ENCODE measurements at regions of chr22 and their contacts with region 1.

Region 1: DNA sequence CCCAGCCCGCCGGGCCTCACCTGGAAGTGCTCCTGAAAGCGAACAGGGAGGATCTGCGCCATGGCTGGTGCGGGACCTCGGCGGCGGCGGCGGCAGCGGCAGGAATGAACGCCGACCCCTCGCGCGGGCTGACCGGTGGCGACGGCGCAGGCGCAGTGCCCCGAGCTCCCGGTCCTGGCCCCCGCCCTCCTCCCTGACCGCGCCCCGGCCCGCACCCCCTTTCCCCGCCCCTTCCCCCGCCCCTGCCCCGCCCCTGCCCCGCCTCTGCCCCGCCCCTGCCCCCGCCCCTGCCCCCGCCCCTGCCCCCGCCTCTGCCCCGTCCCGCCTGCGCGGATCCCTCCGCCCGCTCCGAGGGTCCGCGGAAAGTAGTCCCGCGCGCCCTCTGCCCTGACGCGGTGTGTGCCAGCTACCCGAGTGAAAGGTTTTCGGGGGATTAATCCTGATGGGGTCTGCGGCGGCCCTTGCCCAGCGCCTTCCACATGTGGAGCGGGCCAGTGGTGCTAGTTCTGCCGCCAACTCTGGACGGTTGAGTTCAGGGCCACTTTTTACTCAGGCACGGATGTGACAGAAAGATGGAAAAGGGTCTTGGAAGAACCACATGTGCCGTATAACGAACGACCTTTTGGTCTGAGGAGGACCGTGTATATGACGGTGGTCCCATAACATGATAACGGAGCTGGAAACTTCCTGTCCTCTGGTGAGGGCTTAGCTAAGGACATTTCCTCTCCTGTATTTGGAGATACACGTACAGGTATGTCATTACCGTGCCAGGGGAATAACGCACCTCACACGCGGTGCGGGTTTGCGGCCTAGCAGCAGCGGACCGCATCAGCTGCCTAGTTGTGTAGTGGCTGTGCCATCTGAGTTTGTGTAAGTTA is at the start of gene CLTCL1:
- DNase-seq: peak; percentile 44 to 82 (median 63)
- ATAC-seq: peak; percentile 69
- H3K4me3 ChIP-seq: peak within 1 kb of the TSS; percentile 73
- H3K4me3 Mint-ChIP-seq: peak within 1 kb of the TSS; percentile 91
- H3K27ac ChIP-seq: no peak within 1 kb of the TSS
- H3K27ac Mint-ChIP-seq: peak within 1 kb of the TSS; percentile 67
- H3K4me1 ChIP-seq: peaks cover 21% of the 10 kb centered on the region
- H3K4me1 Mint-ChIP-seq: peaks cover 17% of the 10 kb centered on the region
- H3K27me3 ChIP-seq: peaks cover 0 to 14% of the 10 kb centered on the region in 2 experiments
- H3K27me3 Mint-ChIP-seq: peaks cover 5% of the 10 kb centered on the region
- CTCF ChIP-seq: no peak
- total RNA-seq, gene CLTCL1: 0.52 to 1.5 TPM

Region 2: DNA sequence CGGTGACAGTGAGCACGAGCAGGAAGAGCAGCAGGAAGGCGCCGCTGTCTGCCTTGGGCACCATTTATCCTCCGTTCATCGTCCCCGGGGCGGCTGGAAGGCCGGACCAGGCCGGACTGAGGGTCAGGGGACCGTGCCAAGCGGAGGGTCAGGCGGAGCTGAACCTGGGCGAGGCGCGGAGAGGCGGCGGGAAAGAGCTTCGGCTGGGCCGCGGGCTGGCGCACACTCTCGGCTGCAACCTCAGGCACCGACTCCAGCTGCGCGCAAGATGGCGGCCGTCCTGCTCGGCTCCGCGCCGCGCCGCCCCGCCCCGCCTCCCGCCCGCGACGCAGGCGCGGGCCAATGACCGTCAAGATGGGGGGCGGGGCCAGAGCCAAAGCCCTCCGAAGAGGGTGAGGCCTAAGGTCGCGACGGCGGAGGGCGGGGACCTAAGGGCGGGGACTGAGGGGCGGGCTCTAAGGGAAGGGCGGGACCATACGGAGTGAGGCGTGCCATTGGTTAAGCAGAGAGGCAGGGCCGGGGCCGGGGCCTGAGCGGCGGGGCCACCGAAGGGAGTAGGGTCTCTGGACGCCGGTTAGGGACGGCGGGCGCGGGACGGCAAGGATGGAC is 169.6 kb before region 1 on chr22 and contains the start of gene DGCR2:
- CTCF ChIA-PET with region 1: no interaction called
- POLR2A ChIA-PET with region 1: no interaction called
- intact Hi-C with region 1: loop called in 1 of 2 experiments (anchors 1 kb)
- DNase-seq: peak; percentile 95 to 99 (median 96)
- ATAC-seq: peak; percentile 97
- H3K4me3 ChIP-seq: peak within 1 kb of the TSS; percentile 95
- H3K4me3 Mint-ChIP-seq: peak within 1 kb of the TSS; percentile 94
- H3K27ac ChIP-seq: peak within 1 kb of the TSS in 1 of 2 donors; percentile 73
- H3K27ac Mint-ChIP-seq: peak within 1 kb of the TSS; percentile 87
- H3K4me1 ChIP-seq: peaks cover 52% of the 10 kb centered on the region
- H3K4me1 Mint-ChIP-seq: peaks cover 52% of the 10 kb centered on the region
- H3K27me3 ChIP-seq: no peaks in the 10 kb centered on the region
- H3K27me3 Mint-ChIP-seq: no peaks in the 10 kb centered on the region
- CTCF ChIP-seq: no peak
- total RNA-seq, gene DGCR2: 31.9 to 35.5 TPM

Region 3: GRCh38 chr22:19143967-19144400 is 147.8 kb before region 1 on chr22:
- CTCF ChIA-PET with region 1: interaction called, 4 read pairs
- POLR2A ChIA-PET with region 1: no interaction called
- intact Hi-C with region 1: loop called in 1 of 2 experiments (anchors 2 kb)
- DNase-seq: peak in 7 of 14 experiments; percentile 13 to 66 (median 25)
- ATAC-seq: peak; percentile 16
- H3K4me3 ChIP-seq: peak overlapping the region; percentile 90
- H3K4me3 Mint-ChIP-seq: peak overlapping the region; percentile 97
- H3K27ac ChIP-seq: peak overlapping the region; percentile 81 to 86
- H3K27ac Mint-ChIP-seq: peak overlapping the region; percentile 94
- H3K4me1 ChIP-seq: peaks cover 23% of the 10 kb centered on the region
- H3K4me1 Mint-ChIP-seq: peaks cover 22% of the 10 kb centered on the region
- H3K27me3 ChIP-seq: peaks cover 10 to 16% of the 10 kb centered on the region in 2 experiments
- H3K27me3 Mint-ChIP-seq: peaks cover 16% of the 10 kb centered on the region
- CTCF ChIP-seq: no peak

Region 4: GRCh38 chr22:19432133-19432851 is 140.5 kb after region 1 on chr22 and contains the start of gene MRPL40:
- CTCF ChIA-PET with region 1: no interaction called
- POLR2A ChIA-PET with region 1: interaction called, 8 read pairs
- intact Hi-C with region 1: loop called in 1 of 2 experiments (anchors 5 kb)
- DNase-seq: peak; percentile 66 to 93 (median 86)
- ATAC-seq: peak; percentile 80
- H3K4me3 ChIP-seq: peak within 1 kb of the TSS; percentile 89
- H3K4me3 Mint-ChIP-seq: peak within 1 kb of the TSS; percentile 97
- H3K27ac ChIP-seq: peak within 1 kb of the TSS; percentile 87 to 88
- H3K27ac Mint-ChIP-seq: peak within 1 kb of the TSS; percentile 93
- H3K4me1 ChIP-seq: peaks cover 35% of the 10 kb centered on the region
- H3K4me1 Mint-ChIP-seq: peaks cover 48% of the 10 kb centered on the region
- H3K27me3 ChIP-seq: no peaks in the 10 kb centered on the region
- H3K27me3 Mint-ChIP-seq: no peaks in the 10 kb centered on the region
- CTCF ChIP-seq: no peak
- total RNA-seq, gene MRPL40: 10.7 to 11.3 TPM

Region 5: DNA sequence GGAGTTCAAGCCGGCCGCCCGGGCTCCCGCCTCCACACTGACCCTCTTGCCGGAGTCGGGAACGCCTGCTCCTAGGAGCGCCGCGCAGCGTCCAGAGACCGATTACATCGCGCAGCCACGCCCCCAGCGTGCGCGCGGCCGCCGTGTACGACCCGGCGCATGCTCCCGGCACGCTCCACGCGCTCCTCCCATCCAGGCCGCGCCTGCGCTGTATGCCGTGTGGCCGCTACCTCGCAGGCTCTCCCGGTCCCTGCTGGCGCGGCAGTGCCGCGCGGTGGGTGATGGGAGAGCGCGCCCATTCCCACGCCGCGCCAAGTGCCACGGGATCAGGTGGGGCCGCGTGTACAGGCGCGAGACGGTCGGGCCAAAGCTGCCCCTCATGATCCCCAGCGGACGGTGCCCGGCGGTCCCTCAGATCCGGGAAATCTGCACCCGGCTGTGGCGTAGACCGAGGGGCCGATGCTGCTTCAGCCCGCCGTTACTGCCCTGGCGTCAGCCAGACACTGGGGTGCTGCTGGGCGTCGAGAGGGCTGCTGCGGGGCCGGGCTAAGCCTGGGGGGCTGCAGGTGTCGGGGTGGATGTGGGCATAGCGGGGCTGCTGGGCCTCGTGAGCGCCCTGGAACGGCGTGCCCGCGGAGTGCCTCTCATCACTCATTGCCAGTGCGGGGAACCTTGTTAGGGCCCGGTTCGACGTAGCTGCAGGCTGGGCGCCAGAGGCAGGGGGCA is 563.1 kb after region 1 on chr22 and contains the starts of genes GNB1L and RTL10:
- CTCF ChIA-PET with region 1: no interaction called
- POLR2A ChIA-PET with region 1: no interaction called
- intact Hi-C with region 1: loop called in 1 of 2 experiments (anchors 10 kb)
- DNase-seq: peak; percentile 92 to 99 (median 96)
- ATAC-seq: peak; percentile 89
- H3K4me3 ChIP-seq: peak within 1 kb of the TSS; percentile 99
- H3K4me3 Mint-ChIP-seq: peak within 1 kb of the TSS; percentile 95
- H3K27ac ChIP-seq: peak within 1 kb of the TSS; percentile 78 to 90
- H3K27ac Mint-ChIP-seq: peak within 1 kb of the TSS; percentile 96
- H3K4me1 ChIP-seq: peaks cover 58% of the 10 kb centered on the region
- H3K4me1 Mint-ChIP-seq: peaks cover 71% of the 10 kb centered on the region
- H3K27me3 ChIP-seq: no peaks in the 10 kb centered on the region
- H3K27me3 Mint-ChIP-seq: no peaks in the 10 kb centered on the region
- CTCF ChIP-seq: no peak
- total RNA-seq, gene GNB1L: 3.0 to 6.5 TPM
- total RNA-seq, gene RTL10: 24.7 TPM

Region 6: DNA sequence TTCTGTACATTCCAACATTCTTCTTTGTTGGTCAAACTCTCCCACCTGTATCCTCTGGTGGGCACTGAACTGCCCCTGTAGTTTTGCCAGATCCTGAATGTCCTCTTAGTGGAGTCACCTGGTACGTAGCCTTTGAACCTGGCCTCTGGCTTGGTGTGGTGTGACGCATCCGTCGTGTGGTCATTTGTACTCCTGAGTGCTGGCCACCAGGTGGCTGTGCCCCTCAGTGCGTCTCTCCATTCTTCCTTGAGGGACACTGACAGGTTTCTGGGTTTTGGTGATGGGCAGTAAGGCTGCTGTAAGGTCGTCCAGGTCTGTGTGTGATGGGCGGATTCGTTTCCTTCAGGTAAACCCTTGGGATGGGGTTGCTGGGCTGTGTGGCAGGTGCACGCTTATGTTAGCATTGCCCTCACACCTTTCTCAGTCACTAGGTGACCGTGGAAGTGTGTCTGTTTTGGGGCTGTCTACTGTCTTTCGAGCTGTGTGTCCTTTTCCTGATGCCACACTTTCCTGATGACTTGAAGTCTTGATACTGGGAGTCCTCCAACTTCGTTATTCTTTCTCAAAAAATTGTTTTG is 810.5 kb after region 1 on chr22:
- CTCF ChIA-PET with region 1: no interaction called
- POLR2A ChIA-PET with region 1: no interaction called
- intact Hi-C with region 1: loop called in 1 of 2 experiments (anchors 10 kb)
- DNase-seq: no peak
- ATAC-seq: no peak
- H3K4me3 ChIP-seq: no peak overlapping the region
- H3K4me3 Mint-ChIP-seq: no peak overlapping the region
- H3K27ac ChIP-seq: peak overlapping the region in 1 of 2 donors; percentile 51
- H3K27ac Mint-ChIP-seq: peak overlapping the region; percentile 96
- H3K4me1 ChIP-seq: peaks cover 32% of the 10 kb centered on the region
- H3K4me1 Mint-ChIP-seq: peaks cover 60% of the 10 kb centered on the region
- H3K27me3 ChIP-seq: no peaks in the 10 kb centered on the region
- H3K27me3 Mint-ChIP-seq: no peaks in the 10 kb centered on the region
- CTCF ChIP-seq: no peak

Measured in CD4-positive, alpha-beta T cell (primary cell).